Mammary epithelial cell (primary cell): ENCODE measurements at regions of chr12 and their contacts with region 1.

Region 1: DNA sequence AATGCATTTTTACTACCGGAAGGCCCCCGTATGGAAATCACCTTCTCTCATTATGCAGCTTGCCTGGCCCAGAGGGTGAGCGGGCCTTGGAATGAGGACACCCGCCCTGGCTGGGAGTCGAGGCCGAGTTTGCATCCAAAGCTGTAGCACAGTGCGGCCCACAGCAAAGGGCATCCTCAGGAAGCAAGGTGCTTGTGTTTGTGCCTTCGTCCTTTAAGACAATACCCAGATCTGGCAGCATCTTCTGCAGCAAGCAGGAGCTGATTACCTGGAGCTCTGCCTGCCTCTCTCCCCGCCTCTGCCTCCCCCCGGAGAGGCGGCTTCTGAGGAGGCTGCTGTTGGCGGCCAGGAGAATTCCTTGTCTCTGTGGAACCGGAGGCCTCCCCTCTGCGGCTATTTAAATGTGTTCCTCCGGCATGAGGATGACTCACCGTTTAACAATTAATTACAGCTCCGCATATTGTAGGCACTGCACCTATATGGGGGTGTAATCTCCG is 145.3 kb downstream of the CACNA1C start:
- DNase-seq: peak; percentile 63
- H3K4me3 ChIP-seq: no peak overlapping the region
- H3K27ac ChIP-seq: no peak overlapping the region
- H3K4me1 ChIP-seq: peaks cover 9% of the 10 kb centered on the region
- H3K27me3 ChIP-seq: no peaks in the 10 kb centered on the region
- CTCF ChIP-seq: no peak

Region 2: DNA sequence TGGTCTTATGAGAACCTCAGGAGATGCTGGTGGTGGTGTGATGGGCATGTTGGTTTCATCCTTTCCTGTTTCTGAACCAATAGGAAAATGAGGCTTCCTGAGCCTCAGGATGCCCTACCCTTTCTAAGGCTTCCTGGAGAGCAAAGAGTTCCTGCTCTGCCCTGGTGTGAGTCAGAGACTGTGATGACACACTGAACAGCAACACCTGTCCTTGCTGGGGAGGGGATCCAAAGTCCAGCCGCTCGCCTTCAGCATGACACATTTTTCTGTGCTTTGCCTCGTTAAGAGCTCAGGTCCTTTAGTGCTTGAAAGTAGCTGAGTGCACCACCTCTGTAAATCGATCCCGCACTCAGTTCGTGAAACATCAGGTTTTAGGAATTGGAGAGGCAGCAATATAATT is 29.2 kb before region 1 on chr12:
- CTCF ChIA-PET with region 1: no interaction called
- dilution Hi-C with region 1: loop called (anchors 5 kb)
- in situ Hi-C with region 1: no loop called
- intact Hi-C with region 1: no loop called
- DNase-seq: peak; percentile 77
- H3K4me3 ChIP-seq: no peak overlapping the region
- H3K27ac ChIP-seq: no peak overlapping the region
- H3K4me1 ChIP-seq: peaks cover 21% of the 10 kb centered on the region
- H3K27me3 ChIP-seq: no peaks in the 10 kb centered on the region
- CTCF ChIP-seq: no peak

Region 3: GRCh38 chr12:2267703-2268501 is 69.8 kb after region 1 on chr12:
- CTCF ChIA-PET with region 1: no interaction called
- dilution Hi-C with region 1: loop called (anchors 5 kb)
- in situ Hi-C with region 1: no loop called
- intact Hi-C with region 1: no loop called
- DNase-seq: peak; percentile 19
- H3K4me3 ChIP-seq: no peak overlapping the region
- H3K27ac ChIP-seq: peak overlapping the region; percentile 24
- H3K4me1 ChIP-seq: peaks cover 30% of the 10 kb centered on the region
- H3K27me3 ChIP-seq: no peaks in the 10 kb centered on the region
- CTCF ChIP-seq: no peak